Activated CD4-positive, alpha-beta T cell treated with anti-CD3 and anti-CD28 coated beads for 36 hours (primary cell): ENCODE measurements at regions of chr10 and their contacts with region 1.

Region 1: GRCh38 chr10:10919976-10920375 is 97.7 kb upstream of the CELF2 start:
- DNase-seq: no peak
- ATAC-seq: no peak
- H3K4me3 Mint-ChIP-seq: no peak overlapping the region
- H3K27ac Mint-ChIP-seq: no peak overlapping the region
- H3K4me1 Mint-ChIP-seq: peaks cover 5% of the 10 kb centered on the region
- H3K27me3 Mint-ChIP-seq: peaks cover 10% of the 10 kb centered on the region

Region 2: DNA sequence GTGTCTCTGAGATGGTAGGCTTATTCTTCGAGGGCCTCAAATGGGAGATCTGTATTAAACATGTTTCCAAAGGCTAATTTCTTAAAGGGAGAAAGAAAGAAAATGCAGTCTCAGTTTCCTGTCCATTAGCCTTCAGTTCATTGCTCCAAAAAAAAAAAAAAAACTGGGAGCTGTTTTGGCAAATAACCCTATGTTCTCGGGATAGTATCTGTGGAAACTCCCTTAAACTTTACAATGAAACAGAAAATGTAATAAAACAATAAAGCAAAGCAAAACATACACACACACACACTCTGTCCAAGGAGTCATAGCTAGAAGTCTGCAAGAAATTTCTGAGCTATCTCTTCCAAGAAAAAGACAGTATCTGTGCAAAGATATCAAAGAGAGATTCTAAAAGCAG is 74.8 kb before region 1 on chr10:
- CTCF ChIA-PET with region 1: no interaction called
- POLR2A ChIA-PET with region 1: no interaction called
- intact Hi-C with region 1: no loop called
- DNase-seq: no peak
- ATAC-seq: no peak
- H3K4me3 Mint-ChIP-seq: no peak overlapping the region
- H3K27ac Mint-ChIP-seq: no peak overlapping the region
- H3K4me1 Mint-ChIP-seq: no peaks in the 10 kb centered on the region
- H3K27me3 Mint-ChIP-seq: peaks cover 12% of the 10 kb centered on the region

Region 3: DNA sequence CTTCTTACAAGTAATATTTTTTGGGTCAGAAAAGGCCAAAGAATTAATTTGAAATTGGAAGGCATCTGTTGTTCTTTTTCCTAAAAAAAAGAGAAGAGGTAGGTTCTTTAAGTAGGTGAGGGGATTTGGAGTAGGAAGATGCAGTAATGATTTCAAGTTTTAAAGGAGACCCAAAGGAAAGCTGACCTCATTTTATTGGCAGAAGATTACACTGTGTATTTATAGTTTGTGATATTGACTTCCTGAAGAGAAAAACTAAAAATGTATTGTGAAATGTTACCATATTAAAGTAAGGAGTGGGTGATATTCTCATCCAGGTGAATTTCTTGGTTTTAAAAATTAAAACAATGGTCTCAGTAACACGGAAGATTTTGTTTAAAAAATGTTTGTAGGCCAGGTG is 41.1 kb after region 1 on chr10:
- CTCF ChIA-PET with region 1: no interaction called
- POLR2A ChIA-PET with region 1: no interaction called
- intact Hi-C with region 1: loop called in 1 of 2 experiments (anchors 1 kb)
- DNase-seq: no peak
- ATAC-seq: no peak
- H3K4me3 Mint-ChIP-seq: no peak overlapping the region
- H3K27ac Mint-ChIP-seq: no peak overlapping the region
- H3K4me1 Mint-ChIP-seq: peaks cover 5% of the 10 kb centered on the region
- H3K27me3 Mint-ChIP-seq: peaks cover 5% of the 10 kb centered on the region

Region 4: DNA sequence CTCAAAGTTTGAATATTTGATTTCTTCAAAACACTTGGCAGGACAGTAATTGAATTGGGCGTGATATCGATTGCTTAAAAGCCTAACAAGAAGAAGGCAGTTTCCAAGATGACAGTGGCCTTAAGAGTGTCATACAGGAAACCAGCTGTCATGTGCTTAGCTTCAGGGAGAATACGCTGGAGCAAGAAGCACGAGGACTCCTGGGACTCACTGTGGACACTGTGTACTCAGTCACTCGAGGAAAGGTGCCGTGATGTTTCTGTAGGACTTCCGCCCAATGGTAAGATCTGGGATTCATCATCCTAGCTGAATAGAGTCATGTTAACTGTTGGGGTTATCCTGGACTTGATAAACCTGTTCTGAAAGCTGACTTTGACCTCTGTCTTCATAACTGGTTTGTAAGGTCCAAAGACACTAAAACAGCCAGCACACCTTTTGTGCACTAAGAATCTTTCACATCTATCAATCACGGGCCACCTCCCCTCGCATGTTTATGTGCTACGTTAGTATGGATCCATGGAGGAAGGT is 211.2 kb after region 1 on chr10:
- CTCF ChIA-PET with region 1: no interaction called
- POLR2A ChIA-PET with region 1: no interaction called
- intact Hi-C with region 1: no loop called
- DNase-seq: no peak
- ATAC-seq: no peak
- H3K4me3 Mint-ChIP-seq: no peak overlapping the region
- H3K27ac Mint-ChIP-seq: no peak overlapping the region
- H3K4me1 Mint-ChIP-seq: peaks cover 13% of the 10 kb centered on the region
- H3K27me3 Mint-ChIP-seq: no peaks in the 10 kb centered on the region